ENCODE measurements at regions of chr7 and their contacts with region 1.

Region 1: GRCh38 chr7:33109005-33109757 is at the start of gene RP9:
- DNase-seq: peak; percentile 84
- ATAC-seq: peak; percentile 92
- H3K4me3 Mint-ChIP-seq: peak within 1 kb of the TSS; percentile 89
- H3K27ac Mint-ChIP-seq: peak within 1 kb of the TSS; percentile 80
- H3K4me1 Mint-ChIP-seq: peaks cover 43% of the 10 kb centered on the region
- H3K27me3 Mint-ChIP-seq: peaks cover 2% of the 10 kb centered on the region
- CTCF ChIP-seq: no peak
- total RNA-seq, gene RP9: 27.4 and 29.6 TPM in 2 replicates

Region 2: GRCh38 chr7:32490127-32490822 is 618.9 kb before region 1 on chr7 and contains the start of gene LSM5:
- CTCF ChIA-PET with region 1: no interaction called
- POLR2A ChIA-PET with region 1: interaction called, 7 read pairs
- intact Hi-C with region 1: loop called (anchors 5 kb)
- DNase-seq: peak; percentile 82
- ATAC-seq: peak; percentile 60
- H3K4me3 Mint-ChIP-seq: peak within 1 kb of the TSS; percentile 95
- H3K27ac Mint-ChIP-seq: peak within 1 kb of the TSS; percentile 93
- H3K4me1 Mint-ChIP-seq: peaks cover 24% of the 10 kb centered on the region
- H3K27me3 Mint-ChIP-seq: no peaks in the 10 kb centered on the region
- CTCF ChIP-seq: no peak
- total RNA-seq, gene LSM5: 47.1 and 53.3 TPM in 2 replicates

Region 3: DNA sequence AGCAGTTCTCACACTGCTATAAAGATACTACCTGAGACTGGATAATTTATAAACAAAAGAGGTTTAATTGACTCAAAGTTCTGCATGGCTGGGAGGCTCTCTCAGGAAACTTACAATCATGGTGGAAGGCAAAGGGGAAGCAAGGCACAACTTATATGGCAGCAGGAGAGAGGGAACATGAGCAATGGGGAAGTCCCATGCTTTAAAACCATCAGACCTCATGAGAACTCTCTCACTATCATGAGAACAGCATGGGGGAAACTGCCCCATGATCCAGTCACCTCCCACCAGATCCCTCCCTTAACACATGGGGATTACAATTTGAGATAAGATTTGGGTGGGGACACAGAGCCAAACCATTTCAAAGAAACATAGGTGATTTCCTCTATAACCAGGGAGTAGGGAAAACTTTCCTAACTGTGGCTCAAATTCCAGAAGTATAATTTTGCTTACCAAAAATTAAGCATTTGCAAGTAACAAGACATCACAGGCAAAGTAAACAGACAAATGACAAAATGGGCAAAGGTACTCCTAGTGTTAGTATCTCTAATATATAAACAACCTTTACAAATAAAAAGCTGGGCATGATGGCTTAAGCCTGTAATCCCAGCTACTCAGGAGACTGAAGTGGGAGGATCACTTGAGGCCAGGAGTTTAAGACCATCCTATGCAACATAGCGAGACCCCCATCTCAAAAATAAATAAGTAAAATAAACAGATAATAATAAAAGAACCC is 305.6 kb before region 1 on chr7:
- CTCF ChIA-PET with region 1: interaction called, 15 read pairs
- POLR2A ChIA-PET with region 1: no interaction called
- intact Hi-C with region 1: loop called (anchors 1 kb)
- DNase-seq: no peak
- ATAC-seq: no peak
- H3K4me3 Mint-ChIP-seq: no peak overlapping the region
- H3K27ac Mint-ChIP-seq: no peak overlapping the region
- H3K4me1 Mint-ChIP-seq: no peaks in the 10 kb centered on the region
- H3K27me3 Mint-ChIP-seq: no peaks in the 10 kb centered on the region
- CTCF ChIP-seq: no peak

Region 4: GRCh38 chr7:32891800-32892520 is 217.2 kb before region 1 on chr7:
- CTCF ChIA-PET with region 1: interaction called, 17 read pairs
- POLR2A ChIA-PET with region 1: interaction called, 24 read pairs
- intact Hi-C with region 1: loop called (anchors 1 kb)
- DNase-seq: peak; percentile 96
- ATAC-seq: peak; percentile 66
- H3K4me3 Mint-ChIP-seq: peak overlapping the region; percentile 91
- H3K27ac Mint-ChIP-seq: peak overlapping the region; percentile 97
- H3K4me1 Mint-ChIP-seq: peaks cover 56% of the 10 kb centered on the region
- H3K27me3 Mint-ChIP-seq: no peaks in the 10 kb centered on the region
- CTCF ChIP-seq: no peak

Region 5: GRCh38 chr7:32957326-32958045 is 151.7 kb before region 1 on chr7 and contains the start of gene FKBP9:
- CTCF ChIA-PET with region 1: interaction called, 18 read pairs
- POLR2A ChIA-PET with region 1: interaction called, 3 read pairs
- intact Hi-C with region 1: no loop called
- DNase-seq: peak; percentile 30
- ATAC-seq: peak; percentile 68
- H3K4me3 Mint-ChIP-seq: peak within 1 kb of the TSS; percentile 75
- H3K27ac Mint-ChIP-seq: no peak within 1 kb of the TSS
- H3K4me1 Mint-ChIP-seq: peaks cover 7% of the 10 kb centered on the region
- H3K27me3 Mint-ChIP-seq: peaks cover 25% of the 10 kb centered on the region
- CTCF ChIP-seq: no peak
- total RNA-seq, gene FKBP9: 0.51 and 0.69 TPM in 2 replicates

Region 6: GRCh38 chr7:33050535-33051318 is 58.5 kb before region 1 on chr7:
- CTCF ChIA-PET with region 1: interaction called, 10 read pairs
- POLR2A ChIA-PET with region 1: interaction called, 4 read pairs
- intact Hi-C with region 1: loop called (anchors 1 kb)
- DNase-seq: no peak
- ATAC-seq: peak; percentile 64
- H3K4me3 Mint-ChIP-seq: peak overlapping the region; percentile 9
- H3K27ac Mint-ChIP-seq: peak overlapping the region; percentile 56
- H3K4me1 Mint-ChIP-seq: peaks cover 66% of the 10 kb centered on the region
- H3K27me3 Mint-ChIP-seq: no peaks in the 10 kb centered on the region
- CTCF ChIP-seq: no peak

Region 7: DNA sequence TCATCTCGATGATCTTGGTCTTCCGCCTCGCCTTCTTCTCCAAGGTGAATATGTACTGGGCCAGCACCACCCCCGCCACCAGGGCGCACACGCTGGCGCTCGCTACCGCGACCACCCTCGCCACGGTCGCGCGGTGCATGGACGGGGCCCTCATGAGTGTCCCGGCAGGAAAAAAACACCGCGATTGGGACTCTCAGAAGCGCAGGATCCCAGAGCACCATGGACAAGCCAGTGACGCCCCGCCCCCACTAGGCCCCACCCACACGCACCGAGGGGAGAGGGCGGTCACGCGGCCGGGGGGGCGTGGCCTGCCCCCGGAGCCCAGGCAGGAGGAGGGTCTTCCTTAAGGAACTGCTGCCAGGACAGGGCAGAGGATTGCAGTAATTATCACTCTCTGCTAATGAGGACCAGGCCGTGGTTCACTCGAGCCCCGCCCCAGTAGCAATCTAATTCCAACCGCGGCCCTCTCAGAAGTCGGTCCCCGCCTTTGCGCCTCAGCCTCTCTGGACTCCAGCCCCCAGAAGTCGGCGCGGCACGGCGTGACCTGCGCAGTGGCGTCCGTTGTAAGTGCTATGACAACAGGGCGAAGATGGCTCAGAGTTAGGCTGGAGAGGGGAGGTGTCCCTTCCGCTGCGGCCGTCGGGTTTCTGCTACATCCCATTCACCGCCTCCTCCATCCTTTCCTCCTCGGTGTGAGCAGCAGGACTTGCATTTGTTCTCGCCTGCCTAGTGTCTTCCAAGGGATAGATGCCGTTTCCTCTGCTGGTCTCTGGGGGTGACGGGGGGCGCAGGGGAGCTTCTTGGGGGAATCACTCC is 20.0 kb after region 1 on chr7 and contains the start of gene BBS9:
- CTCF ChIA-PET with region 1: interaction called, 12 read pairs
- POLR2A ChIA-PET with region 1: interaction called, 8 read pairs
- intact Hi-C with region 1: loop called (anchors 1 kb)
- DNase-seq: peak; percentile 90
- ATAC-seq: peak; percentile 92
- H3K4me3 Mint-ChIP-seq: peak within 1 kb of the TSS; percentile 94
- H3K27ac Mint-ChIP-seq: peak within 1 kb of the TSS; percentile 92
- H3K4me1 Mint-ChIP-seq: peaks cover 18% of the 10 kb centered on the region
- H3K27me3 Mint-ChIP-seq: no peaks in the 10 kb centered on the region
- CTCF ChIP-seq: no peak
- total RNA-seq, gene BBS9: 18.3 and 18.6 TPM in 2 replicates

Region 8: DNA sequence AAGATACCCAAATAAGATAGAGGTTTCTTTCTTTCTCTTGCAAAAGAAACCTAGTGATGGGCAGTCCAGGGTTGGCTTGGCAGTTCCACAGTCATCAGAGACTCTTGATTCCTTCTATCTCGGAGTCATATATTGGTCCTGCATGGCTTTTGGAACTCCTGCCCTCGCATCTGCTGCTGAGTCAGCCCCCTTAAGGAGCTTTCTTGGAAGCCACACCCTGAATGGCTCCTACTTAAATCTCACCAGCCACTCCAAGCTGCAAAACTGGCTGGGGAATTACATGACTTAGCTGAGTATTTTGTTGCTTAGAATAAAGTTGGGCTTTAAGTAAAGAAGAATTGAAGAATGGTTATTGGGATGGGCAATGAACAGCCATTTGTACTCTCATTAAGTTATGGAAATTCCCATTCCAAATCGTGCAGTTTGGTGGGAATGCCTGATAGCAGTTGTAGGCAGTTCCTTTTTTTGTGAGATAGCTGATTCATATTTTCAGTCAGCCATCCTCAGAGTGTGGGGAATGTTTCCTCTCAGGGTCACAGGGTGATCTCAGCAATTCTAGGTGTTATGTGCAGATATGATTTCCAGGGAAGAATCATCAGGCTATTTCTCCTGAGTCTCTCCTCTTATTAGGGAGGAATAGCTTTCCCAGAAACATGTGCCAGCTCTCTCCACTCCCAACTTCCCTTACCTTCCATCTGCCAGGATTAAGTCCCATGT is 230.1 kb after region 1 on chr7:
- CTCF ChIA-PET with region 1: no interaction called
- POLR2A ChIA-PET with region 1: no interaction called
- intact Hi-C with region 1: no loop called
- DNase-seq: no peak
- ATAC-seq: no peak
- H3K4me3 Mint-ChIP-seq: no peak overlapping the region
- H3K27ac Mint-ChIP-seq: no peak overlapping the region
- H3K4me1 Mint-ChIP-seq: no peaks in the 10 kb centered on the region
- H3K27me3 Mint-ChIP-seq: no peaks in the 10 kb centered on the region
- CTCF ChIP-seq: no peak